Activated CD4-positive, alpha-beta T cell treated with anti-CD3 and anti-CD28 coated beads for 36 hours (primary cell): ENCODE measurements at regions of chr1 and their contacts with region 1.

Region 1: GRCh38 chr1:113978863-113979702 is at the start of gene OLFML3:
- DNase-seq: peak; percentile 79
- ATAC-seq: peak; percentile 51
- H3K4me3 Mint-ChIP-seq: no peak within 1 kb of the TSS
- H3K27ac Mint-ChIP-seq: no peak within 1 kb of the TSS
- H3K4me1 Mint-ChIP-seq: peaks cover 42% of the 10 kb centered on the region
- H3K27me3 Mint-ChIP-seq: no peaks in the 10 kb centered on the region
- total RNA-seq, gene OLFML3: 0.11 TPM in 1 of 2 experiments, not detected in the other

Region 2: DNA sequence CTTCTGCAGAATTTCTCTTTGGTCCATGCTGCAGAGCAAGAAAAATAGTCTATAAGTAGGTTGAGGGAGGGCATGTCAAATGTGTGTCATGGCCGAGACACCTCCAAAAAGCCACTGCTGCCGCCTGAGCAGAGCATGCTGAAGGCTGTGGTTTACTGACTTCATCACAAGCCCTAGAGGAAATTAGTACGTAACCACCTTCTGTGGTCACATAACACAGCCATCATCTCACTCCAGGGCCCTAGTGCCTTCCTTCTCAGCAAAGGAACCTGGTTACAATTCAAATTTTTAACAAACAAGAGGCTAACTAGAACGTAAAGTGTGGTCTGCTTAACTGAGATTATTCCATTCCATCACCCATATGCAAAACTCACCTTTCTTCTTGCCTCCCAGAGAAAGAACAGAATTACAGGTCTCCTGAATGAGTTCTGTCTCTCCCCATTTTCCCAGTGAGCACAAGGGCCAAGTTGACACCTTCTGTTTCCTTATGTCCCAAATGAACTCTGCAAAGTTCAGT is 107.4 kb before region 1 on chr1 and contains the start of gene PTPN22:
- CTCF ChIA-PET with region 1: no interaction called
- POLR2A ChIA-PET with region 1: no interaction called
- intact Hi-C with region 1: no loop called
- DNase-seq: peak; percentile 89
- ATAC-seq: peak; percentile 84
- H3K4me3 Mint-ChIP-seq: peak within 1 kb of the TSS; percentile 84
- H3K27ac Mint-ChIP-seq: peak within 1 kb of the TSS; percentile 99
- H3K4me1 Mint-ChIP-seq: peaks cover 72% of the 10 kb centered on the region
- H3K27me3 Mint-ChIP-seq: no peaks in the 10 kb centered on the region
- total RNA-seq, gene PTPN22: 42.4 to 52.6 TPM

Region 3: DNA sequence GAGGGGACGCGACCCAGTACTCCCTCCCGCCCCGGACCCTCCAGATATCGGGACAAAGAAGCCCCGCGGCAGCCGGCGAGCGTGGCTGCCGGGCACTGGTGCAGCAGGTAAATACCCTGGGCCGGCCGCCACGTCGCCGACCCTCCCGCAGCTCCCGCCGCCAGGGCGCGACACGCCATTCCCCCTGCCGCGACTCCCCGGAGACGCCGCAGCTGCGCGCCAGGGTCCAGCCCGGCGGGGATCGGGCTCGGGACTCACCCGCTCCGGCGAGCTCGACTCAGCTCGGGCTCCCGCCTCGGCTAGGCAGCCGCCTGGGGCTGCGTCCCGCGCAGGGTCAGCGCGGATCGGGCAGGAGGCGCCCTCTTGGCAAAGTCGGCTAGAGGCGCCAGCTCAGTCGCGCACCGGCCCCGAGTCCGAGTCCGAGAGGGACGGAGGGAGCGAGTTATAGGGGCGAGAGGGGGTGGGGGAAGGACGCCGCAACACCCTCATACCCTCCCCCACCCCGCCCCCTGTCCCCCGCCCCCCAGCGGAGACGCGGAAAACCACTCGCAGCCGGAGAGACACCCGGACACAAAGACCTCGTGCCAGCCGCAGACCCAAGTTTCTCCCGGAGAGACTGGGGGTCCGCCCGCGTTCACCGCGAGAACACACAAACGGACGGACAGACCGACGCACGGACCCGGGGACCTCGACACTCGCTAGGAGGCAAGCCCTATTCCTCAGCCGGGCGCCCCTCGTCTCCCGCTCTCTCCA is 173.6 kb after region 1 on chr1:
- CTCF ChIA-PET with region 1: no interaction called
- POLR2A ChIA-PET with region 1: no interaction called
- intact Hi-C with region 1: loop called in 1 of 2 experiments (anchors 10 kb)
- DNase-seq: peak; percentile 42
- ATAC-seq: peak; percentile 63
- H3K4me3 Mint-ChIP-seq: no peak overlapping the region
- H3K27ac Mint-ChIP-seq: no peak overlapping the region
- H3K4me1 Mint-ChIP-seq: peaks cover 10% of the 10 kb centered on the region
- H3K27me3 Mint-ChIP-seq: peaks cover 65% of the 10 kb centered on the region

Region 4: GRCh38 chr1:114282751-114283403 is 303.8 kb after region 1 on chr1:
- CTCF ChIA-PET with region 1: interaction called, 22 read pairs
- POLR2A ChIA-PET with region 1: interaction called, 3 read pairs
- intact Hi-C with region 1: loop called (anchors 1 kb)
- DNase-seq: peak; percentile 92
- ATAC-seq: peak; percentile 100
- H3K4me3 Mint-ChIP-seq: no peak overlapping the region
- H3K27ac Mint-ChIP-seq: no peak overlapping the region
- H3K4me1 Mint-ChIP-seq: peaks cover 8% of the 10 kb centered on the region
- H3K27me3 Mint-ChIP-seq: peaks cover 2% of the 10 kb centered on the region

Region 5: GRCh38 chr1:114428083-114428749 is 449.1 kb after region 1 on chr1:
- CTCF ChIA-PET with region 1: interaction called, 4 read pairs
- POLR2A ChIA-PET with region 1: no interaction called
- intact Hi-C with region 1: loop called in 1 of 2 experiments (anchors 10 kb)
- DNase-seq: peak; percentile 14
- ATAC-seq: no peak
- H3K4me3 Mint-ChIP-seq: no peak overlapping the region
- H3K27ac Mint-ChIP-seq: no peak overlapping the region
- H3K4me1 Mint-ChIP-seq: no peaks in the 10 kb centered on the region
- H3K27me3 Mint-ChIP-seq: no peaks in the 10 kb centered on the region

Region 6: DNA sequence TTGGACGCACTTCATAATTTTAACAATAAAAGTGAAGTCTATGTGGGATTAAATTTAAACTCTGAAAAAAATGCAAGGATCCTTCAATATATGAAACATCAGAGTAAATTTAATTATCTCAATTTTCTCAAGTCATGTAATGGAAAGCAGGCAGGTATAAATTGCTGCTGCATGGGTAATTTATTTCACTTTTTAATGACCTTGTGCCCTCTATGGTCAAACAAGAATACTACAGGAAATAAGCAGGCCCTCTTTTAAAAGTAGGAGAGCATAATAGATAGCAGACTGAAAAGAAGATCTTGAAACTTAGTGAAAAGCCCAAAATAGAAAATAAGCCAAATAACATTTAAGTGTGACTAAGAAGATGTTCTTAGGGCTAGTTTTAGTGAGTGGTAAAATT is 579.5 kb after region 1 on chr1:
- CTCF ChIA-PET with region 1: no interaction called
- POLR2A ChIA-PET with region 1: no interaction called
- intact Hi-C with region 1: loop called in 1 of 2 experiments (anchors 5 kb)
- DNase-seq: no peak
- ATAC-seq: no peak
- H3K4me3 Mint-ChIP-seq: no peak overlapping the region
- H3K27ac Mint-ChIP-seq: no peak overlapping the region
- H3K4me1 Mint-ChIP-seq: no peaks in the 10 kb centered on the region
- H3K27me3 Mint-ChIP-seq: no peaks in the 10 kb centered on the region

Region 7: DNA sequence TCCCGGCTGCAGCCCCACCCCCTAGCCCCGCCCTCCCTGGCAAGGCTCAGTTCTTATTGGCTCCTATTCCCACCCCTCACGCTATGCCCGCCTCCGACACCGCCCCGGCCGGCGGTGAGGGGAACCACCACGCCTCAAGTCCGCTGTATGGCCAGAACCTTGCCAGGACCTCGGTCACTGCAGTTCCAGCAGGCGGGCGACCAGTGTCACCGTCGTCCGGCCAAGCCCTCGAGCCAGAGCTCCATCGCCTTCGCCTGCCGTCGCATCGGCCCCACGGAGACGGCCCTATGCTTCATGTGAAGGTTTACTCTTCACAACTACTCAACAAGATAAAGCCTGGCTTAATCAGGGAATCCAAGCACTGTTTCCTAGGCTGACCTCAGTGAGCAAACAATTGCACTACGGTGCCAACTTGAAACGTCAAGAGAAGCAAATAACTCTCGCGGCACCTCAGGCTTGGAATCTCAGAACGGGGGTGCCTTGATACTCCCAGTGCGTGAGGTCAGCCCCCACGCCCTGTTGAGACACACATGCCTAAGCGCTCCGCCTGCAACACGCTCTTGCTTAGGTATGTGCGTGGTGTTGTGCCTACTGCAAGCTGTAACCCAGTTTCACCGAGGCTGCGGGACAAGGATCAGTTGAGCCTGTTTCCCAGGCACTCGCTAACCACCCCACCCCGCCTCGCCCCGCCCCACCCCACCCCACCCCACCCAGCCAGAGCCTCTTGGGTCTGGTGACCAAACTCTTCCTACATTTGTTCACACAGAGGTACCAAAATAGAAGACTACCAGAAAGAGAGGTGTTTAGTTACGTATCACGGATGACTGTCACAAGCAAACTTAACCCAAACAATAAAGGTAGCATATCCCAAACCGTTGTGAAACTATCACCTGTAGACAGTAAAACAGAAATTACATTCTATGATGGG is 691.3 kb after region 1 on chr1:
- CTCF ChIA-PET with region 1: no interaction called
- POLR2A ChIA-PET with region 1: no interaction called
- intact Hi-C with region 1: loop called in 1 of 2 experiments (anchors 1 kb)
- DNase-seq: peak; percentile 93
- ATAC-seq: peak; percentile 97
- H3K4me3 Mint-ChIP-seq: peak overlapping the region; percentile 84
- H3K27ac Mint-ChIP-seq: peak overlapping the region; percentile 63
- H3K4me1 Mint-ChIP-seq: peaks cover 11% of the 10 kb centered on the region
- H3K27me3 Mint-ChIP-seq: peaks cover 15% of the 10 kb centered on the region

Region 8: DNA sequence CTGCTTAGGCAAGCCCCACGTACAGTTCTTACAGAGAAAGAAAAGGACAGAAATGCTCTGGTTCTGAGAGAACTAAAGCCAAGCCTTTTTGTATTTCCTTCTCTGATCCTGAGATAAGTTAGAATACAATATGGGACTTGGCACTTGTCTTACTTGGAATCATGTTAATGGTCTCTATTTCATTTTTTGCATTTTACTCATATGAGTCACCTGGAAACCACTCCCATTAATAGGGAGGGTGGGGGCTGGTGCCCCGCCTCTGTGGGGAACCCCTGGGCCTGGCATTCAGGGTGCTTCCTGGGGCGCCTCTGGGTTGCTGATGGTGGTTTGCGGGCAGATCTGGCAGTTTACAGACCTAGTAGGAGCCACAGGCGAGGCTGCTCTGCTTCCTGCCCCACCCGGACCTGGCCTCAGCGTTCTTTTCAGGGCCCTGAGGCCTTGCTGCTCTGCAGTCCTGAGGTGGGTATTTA is 1083.5 kb after region 1 on chr1:
- CTCF ChIA-PET with region 1: no interaction called
- POLR2A ChIA-PET with region 1: no interaction called
- intact Hi-C with region 1: loop called in 1 of 2 experiments (anchors 10 kb)
- DNase-seq: peak; percentile 93
- ATAC-seq: peak; percentile 88
- H3K4me3 Mint-ChIP-seq: peak overlapping the region; percentile 23
- H3K27ac Mint-ChIP-seq: peak overlapping the region; percentile 75
- H3K4me1 Mint-ChIP-seq: peaks cover 40% of the 10 kb centered on the region
- H3K27me3 Mint-ChIP-seq: no peaks in the 10 kb centered on the region